Vagina (tissue), 2 donors: ENCODE measurements at regions of chr1 and their contacts with region 1.

Region 1: DNA sequence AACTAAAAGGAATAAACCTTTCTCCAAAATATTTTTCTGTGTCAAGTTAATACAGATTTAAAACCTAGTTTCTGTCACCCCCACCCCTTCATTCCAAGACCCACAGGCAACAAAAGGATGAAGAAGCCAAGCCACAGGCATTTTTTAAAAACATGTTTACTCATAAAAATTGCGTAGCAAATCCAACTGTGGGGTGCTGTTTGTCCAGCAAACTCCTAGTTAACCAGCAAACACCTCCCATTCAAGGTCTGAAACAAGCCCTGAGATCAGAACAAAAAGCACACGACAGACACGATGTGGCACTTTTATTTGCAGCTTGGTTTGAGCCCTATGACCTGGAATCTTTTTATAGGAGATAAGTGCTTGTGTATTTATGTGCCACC is 149.9 kb upstream of the CAMK1G start:
- DNase-seq: no peak
- H3K4me3 ChIP-seq: no peak overlapping the region
- H3K27ac ChIP-seq: no peak overlapping the region
- H3K4me1 ChIP-seq: peaks cover 10% of the 10 kb centered on the region
- H3K27me3 ChIP-seq: no peaks in the 10 kb centered on the region
- CTCF ChIP-seq: no peak
- POLR2A ChIP-seq: no peak

Region 2: GRCh38 chr1:208189183-208189582 is 1244.5 kb before region 1 on chr1:
- intact Hi-C with region 1: no loop called
- DNase-seq: no peak
- H3K4me3 ChIP-seq: no peak overlapping the region
- H3K27ac ChIP-seq: no peak overlapping the region
- H3K4me1 ChIP-seq: peaks cover 17% of the 10 kb centered on the region
- H3K27me3 ChIP-seq: no peaks in the 10 kb centered on the region
- CTCF ChIP-seq: no peak
- POLR2A ChIP-seq: no peak

Region 3: GRCh38 chr1:209473025-209473424 is 39.4 kb after region 1 on chr1:
- intact Hi-C with region 1: loop called (anchors 1 kb)
- DNase-seq: no peak
- H3K4me3 ChIP-seq: no peak overlapping the region
- H3K27ac ChIP-seq: no peak overlapping the region
- H3K4me1 ChIP-seq: no peaks in the 10 kb centered on the region
- H3K27me3 ChIP-seq: no peaks in the 10 kb centered on the region
- CTCF ChIP-seq: no peak
- POLR2A ChIP-seq: no peak

Region 4: DNA sequence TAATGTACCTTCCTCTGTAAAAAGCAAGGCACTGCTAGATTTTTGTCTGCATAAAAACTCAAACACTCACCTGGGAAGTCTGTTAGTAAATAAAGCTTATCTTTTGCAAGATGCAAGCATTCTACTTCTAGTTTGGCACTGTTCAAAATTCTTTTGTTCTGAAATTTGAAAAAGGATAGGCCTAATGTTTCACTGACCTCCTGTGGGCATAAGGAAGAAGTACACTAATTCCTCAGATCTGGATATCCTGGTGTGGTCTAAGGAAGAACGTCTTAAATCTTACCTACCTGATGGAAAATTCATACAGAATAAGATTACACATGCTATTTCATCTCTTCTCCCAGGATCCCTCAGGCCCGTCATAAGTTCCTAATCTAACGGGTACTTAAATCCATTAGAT is 56.4 kb after region 1 on chr1:
- intact Hi-C with region 1: no loop called
- DNase-seq: no peak
- H3K4me3 ChIP-seq: no peak overlapping the region
- H3K27ac ChIP-seq: no peak overlapping the region
- H3K4me1 ChIP-seq: no peaks in the 10 kb centered on the region
- H3K27me3 ChIP-seq: no peaks in the 10 kb centered on the region
- CTCF ChIP-seq: no peak
- POLR2A ChIP-seq: no peak